ENCODE measurements at regions of chr6 and their contacts with region 1.

Region 1: DNA sequence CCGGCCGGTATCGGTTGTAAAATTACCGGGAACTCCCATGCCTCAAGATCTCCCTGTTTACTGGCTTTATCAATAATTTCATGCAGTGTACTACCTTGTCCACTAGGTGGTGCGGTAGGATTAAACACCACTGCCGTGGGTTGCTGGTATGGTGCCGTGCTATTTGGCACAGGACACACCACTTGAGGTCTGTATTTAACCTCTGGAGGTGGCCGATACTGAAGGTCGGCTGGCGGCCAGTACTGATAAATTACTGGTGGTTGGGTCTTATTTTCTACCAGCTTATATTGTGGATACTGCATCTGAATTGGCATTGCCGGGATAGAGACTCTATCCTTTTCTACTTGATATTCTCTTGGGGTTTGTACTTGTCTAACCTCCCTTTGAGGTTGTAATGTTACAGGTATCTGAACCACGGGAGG is 14.3 kb upstream of the PTCRA start:
- DNase-seq: peak; percentile 68 to 77
- H3K4me3 ChIP-seq: no peak overlapping the region
- H3K27ac ChIP-seq: no peak overlapping the region
- H3K4me1 ChIP-seq: no peaks in the 10 kb centered on the region
- H3K27me3 ChIP-seq: peaks cover 4% of the 10 kb centered on the region; the same call in 1 of the 2 replicates
- CTCF ChIP-seq: peak; percentile 95

Region 2: GRCh38 chr6:42661540-42662153 is 239.9 kb before region 1 on chr6:
- CTCF ChIA-PET with region 1: no interaction called
- POLR2A ChIA-PET with region 1: no interaction called
- intact Hi-C with region 1: loop called (anchors 1 kb)
- DNase-seq: peak; percentile 45 to 63
- H3K4me3 ChIP-seq: no peak overlapping the region
- H3K27ac ChIP-seq: no peak overlapping the region
- H3K4me1 ChIP-seq: no peaks in the 10 kb centered on the region
- H3K27me3 ChIP-seq: no peaks in the 10 kb centered on the region
- CTCF ChIP-seq: peak; percentile 93

Region 3: GRCh38 chr6:42860481-42860880 is 41.1 kb before region 1 on chr6:
- CTCF ChIA-PET with region 1: no interaction called
- POLR2A ChIA-PET with region 1: no interaction called
- intact Hi-C with region 1: no loop called
- DNase-seq: no peak
- H3K4me3 ChIP-seq: no peak overlapping the region
- H3K27ac ChIP-seq: no peak overlapping the region
- H3K4me1 ChIP-seq: no peaks in the 10 kb centered on the region
- H3K27me3 ChIP-seq: no peaks in the 10 kb centered on the region
- CTCF ChIP-seq: no peak

Region 4: GRCh38 chr6:42928986-42929820 is 27.7 kb after region 1 on chr6 and contains the start of gene CNPY3:
- CTCF ChIA-PET with region 1: no interaction called
- POLR2A ChIA-PET with region 1: no interaction called
- intact Hi-C with region 1: no loop called
- DNase-seq: peak; percentile 94
- H3K4me3 ChIP-seq: peak within 1 kb of the TSS; percentile 73
- H3K27ac ChIP-seq: peak within 1 kb of the TSS; percentile 67
- H3K4me1 ChIP-seq: peaks cover 16% of the 10 kb centered on the region
- H3K27me3 ChIP-seq: no peaks in the 10 kb centered on the region
- CTCF ChIP-seq: no peak
- total RNA-seq, gene CNPY3: 47.7 and 54.8 TPM in 2 replicates

Region 5: DNA sequence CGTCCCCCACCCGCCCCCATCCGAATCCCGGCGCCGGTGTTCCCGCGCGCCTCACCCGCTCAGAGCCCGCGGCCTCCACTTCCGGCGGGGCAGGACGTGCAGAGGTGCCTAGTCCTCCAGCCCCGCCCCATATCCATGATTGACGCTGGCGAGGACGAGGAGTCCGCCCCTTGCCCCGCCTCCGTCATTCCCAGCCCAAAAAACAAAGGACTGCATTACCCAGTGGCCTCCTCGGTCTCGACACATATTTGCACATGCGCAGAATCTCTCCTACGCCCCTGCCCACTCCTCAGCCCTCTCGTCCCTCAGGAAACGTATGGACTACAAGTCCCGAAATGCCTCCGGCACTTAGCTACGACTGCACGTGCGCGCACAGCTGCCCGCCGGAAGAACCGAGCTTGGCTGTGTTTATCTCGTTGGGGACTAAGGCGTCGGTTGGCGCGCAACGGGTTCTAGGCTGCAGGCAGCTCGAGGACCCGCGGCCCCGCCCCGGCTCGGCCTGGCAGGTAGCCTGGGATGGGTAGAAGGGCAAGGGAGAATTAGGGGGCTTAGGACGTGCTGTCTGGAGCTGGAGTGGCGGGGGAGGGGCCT is 112.4 kb after region 1 on chr6 and contains the starts of genes KLHDC3 and MEA1:
- CTCF ChIA-PET with region 1: no interaction called
- POLR2A ChIA-PET with region 1: no interaction called
- intact Hi-C with region 1: loop called (anchors 10 kb)
- DNase-seq: peak; percentile 99
- H3K4me3 ChIP-seq: peak within 1 kb of the TSS; percentile 67
- H3K27ac ChIP-seq: peak within 1 kb of the TSS; percentile 18; the same call in 1 of the 2 replicates
- H3K4me1 ChIP-seq: peaks cover 18% of the 10 kb centered on the region
- H3K27me3 ChIP-seq: no peaks in the 10 kb centered on the region
- CTCF ChIP-seq: no peak
- total RNA-seq, gene KLHDC3: 104 and 122 TPM in 2 replicates
- total RNA-seq, gene MEA1: 77.0 and 77.6 TPM in 2 replicates

Region 6: GRCh38 chr6:43053545-43054205 is 152.1 kb after region 1 on chr6 and contains the start of gene CUL7:
- CTCF ChIA-PET with region 1: no interaction called
- POLR2A ChIA-PET with region 1: no interaction called
- intact Hi-C with region 1: no loop called
- DNase-seq: peak; percentile 85 to 92
- H3K4me3 ChIP-seq: peak within 1 kb of the TSS; percentile 89
- H3K27ac ChIP-seq: peak within 1 kb of the TSS; percentile 64
- H3K4me1 ChIP-seq: peaks cover 10% of the 10 kb centered on the region
- H3K27me3 ChIP-seq: no peaks in the 10 kb centered on the region
- CTCF ChIP-seq: 0 out of 2 replicates have a peak, but pooled peaks have one; percentile 15
- total RNA-seq, gene CUL7: 22.8 and 32.4 TPM in 2 replicates

Region 7: GRCh38 chr6:43328528-43328927 is 427.0 kb after region 1 on chr6:
- CTCF ChIA-PET with region 1: no interaction called
- POLR2A ChIA-PET with region 1: no interaction called
- intact Hi-C with region 1: loop called (anchors 10 kb)
- DNase-seq: peak; percentile 31 to 68
- H3K4me3 ChIP-seq: no peak overlapping the region
- H3K27ac ChIP-seq: no peak overlapping the region
- H3K4me1 ChIP-seq: peaks cover 14% of the 10 kb centered on the region
- H3K27me3 ChIP-seq: no peaks in the 10 kb centered on the region
- CTCF ChIP-seq: no peak

Region 8: DNA sequence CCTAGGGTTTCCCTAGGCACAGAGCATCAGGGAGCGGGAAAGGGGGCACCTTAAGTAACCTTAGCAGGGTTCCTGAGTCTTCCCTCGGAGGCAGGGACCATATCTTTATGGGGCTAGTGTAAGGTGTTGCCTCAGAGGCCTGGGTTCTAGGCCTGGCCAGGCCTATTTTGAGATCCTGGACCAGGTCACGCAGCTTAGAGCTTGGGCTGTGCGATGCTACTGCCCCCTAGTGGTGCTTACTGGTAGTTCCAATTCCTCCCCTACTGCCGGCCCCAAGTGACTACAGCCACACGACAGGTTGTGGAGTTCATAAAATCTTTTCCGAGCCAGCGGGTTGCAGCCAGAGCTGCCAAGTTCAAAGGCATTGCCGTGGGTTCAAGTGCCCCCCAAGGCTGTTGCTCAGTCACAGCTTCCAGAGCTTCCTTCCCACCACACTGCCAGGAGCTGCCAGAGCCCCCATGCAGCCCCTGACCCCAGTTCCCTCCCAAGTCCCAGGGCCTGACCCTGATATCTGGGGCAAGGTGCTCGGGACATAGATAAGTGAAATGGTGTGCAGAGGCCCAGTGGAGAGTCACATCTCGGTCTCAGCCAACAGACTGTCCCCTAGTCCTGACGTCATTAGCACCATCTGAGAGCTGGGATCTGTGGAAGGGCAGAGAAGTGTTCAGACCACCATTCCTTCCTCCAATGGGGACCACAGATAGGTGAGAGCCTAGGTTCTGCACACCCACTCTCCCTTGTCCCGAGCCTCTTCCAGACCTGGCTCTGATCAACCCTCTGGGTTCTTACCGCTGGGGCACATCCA is 605.3 kb after region 1 on chr6:
- CTCF ChIA-PET with region 1: no interaction called
- POLR2A ChIA-PET with region 1: no interaction called
- intact Hi-C with region 1: loop called (anchors 2 kb)
- DNase-seq: peak; percentile 62 to 77
- H3K4me3 ChIP-seq: no peak overlapping the region
- H3K27ac ChIP-seq: no peak overlapping the region
- H3K4me1 ChIP-seq: 0 out of 2 replicates have a peak, but pooled peaks cover 7% of the 10 kb centered on the region
- H3K27me3 ChIP-seq: no peaks in the 10 kb centered on the region
- CTCF ChIP-seq: peak; percentile 94

Region 9: GRCh38 chr6:44456070-44456965 is 1554.8 kb after region 1 on chr6:
- CTCF ChIA-PET with region 1: no interaction called
- POLR2A ChIA-PET with region 1: no interaction called
- intact Hi-C with region 1: loop called (anchors 10 kb)
- DNase-seq: peak in 1 of 2 experiments; percentile 33
- H3K4me3 ChIP-seq: peak overlapping the region; percentile 33; the same call in 1 of the 2 replicates
- H3K27ac ChIP-seq: no peak overlapping the region
- H3K4me1 ChIP-seq: peaks cover 24% of the 10 kb centered on the region; the same call in 1 of the 2 replicates
- H3K27me3 ChIP-seq: no peaks in the 10 kb centered on the region
- CTCF ChIP-seq: peak; percentile 90